Natural killer cell (primary cell): ENCODE measurements at regions of chr19 and their contacts with region 1.

Region 1: GRCh38 chr19:4400135-4400936 is at the start of gene SH3GL1:
- DNase-seq: peak; percentile 93 to 98
- ATAC-seq: peak; percentile 64 to 90 (median 68)
- H3K4me3 ChIP-seq: peak within 1 kb of the TSS; percentile 88
- H3K4me3 Mint-ChIP-seq: peak within 1 kb of the TSS; percentile 96
- H3K27ac ChIP-seq: peak within 1 kb of the TSS; percentile 97
- H3K27ac Mint-ChIP-seq: peak within 1 kb of the TSS; percentile 99 to 100
- H3K4me1 ChIP-seq: peaks cover 48% of the 10 kb centered on the region
- H3K4me1 Mint-ChIP-seq: peaks cover 38 to 51% of the 10 kb centered on the region in 2 donors
- H3K27me3 ChIP-seq: no peaks in the 10 kb centered on the region
- H3K27me3 Mint-ChIP-seq: no peaks in the 10 kb centered on the region
- CTCF ChIP-seq: peak; percentile 82
- total RNA-seq, gene SH3GL1: 43.9 to 55.7 (median 49.2) TPM

Region 2: GRCh38 chr19:4246767-4247593 is 153.4 kb before region 1 on chr19 and contains the start of gene YJU2:
- intact Hi-C with region 1: loop called (anchors 1 kb)
- DNase-seq: peak; percentile 96 to 100
- ATAC-seq: peak; percentile 93 to 98 (median 94)
- H3K4me3 ChIP-seq: peak within 1 kb of the TSS; percentile 87
- H3K4me3 Mint-ChIP-seq: peak within 1 kb of the TSS; percentile 88
- H3K27ac ChIP-seq: peak within 1 kb of the TSS; percentile 98
- H3K27ac Mint-ChIP-seq: peak within 1 kb of the TSS; percentile 96 to 100
- H3K4me1 ChIP-seq: peaks cover 16% of the 10 kb centered on the region
- H3K4me1 Mint-ChIP-seq: peaks cover 6 to 31% of the 10 kb centered on the region in 2 donors
- H3K27me3 ChIP-seq: no peaks in the 10 kb centered on the region
- H3K27me3 Mint-ChIP-seq: peaks cover 0 to 2% of the 10 kb centered on the region in 2 donors
- CTCF ChIP-seq: peak; percentile 43
- total RNA-seq, gene YJU2: 37.7 to 39.5 (median 38.5) TPM

Region 3: GRCh38 chr19:4267101-4267900 is 133.0 kb before region 1 on chr19:
- intact Hi-C with region 1: loop called (anchors 5 kb)
- DNase-seq: peak; percentile 46 to 72
- ATAC-seq: peak; percentile 22 to 58 (median 43)
- H3K4me3 ChIP-seq: no peak overlapping the region
- H3K4me3 Mint-ChIP-seq: peak overlapping the region; percentile 26
- H3K27ac ChIP-seq: no peak overlapping the region
- H3K27ac Mint-ChIP-seq: peak overlapping the region in 1 of 2 donors; percentile 88
- H3K4me1 ChIP-seq: peaks cover 49% of the 10 kb centered on the region
- H3K4me1 Mint-ChIP-seq: peaks cover 32 to 48% of the 10 kb centered on the region in 2 donors
- H3K27me3 ChIP-seq: no peaks in the 10 kb centered on the region
- H3K27me3 Mint-ChIP-seq: no peaks in the 10 kb centered on the region
- CTCF ChIP-seq: peak; percentile 79

Region 4: GRCh38 chr19:4342615-4343369 is 57.5 kb before region 1 on chr19:
- intact Hi-C with region 1: loop called (anchors 2 kb)
- DNase-seq: peak; percentile 87 to 98
- ATAC-seq: peak; percentile 79 to 92 (median 80)
- H3K4me3 ChIP-seq: peak overlapping the region; percentile 90
- H3K4me3 Mint-ChIP-seq: peak overlapping the region; percentile 93
- H3K27ac ChIP-seq: peak overlapping the region; percentile 89
- H3K27ac Mint-ChIP-seq: peak overlapping the region; percentile 79 to 92
- H3K4me1 ChIP-seq: peaks cover 51% of the 10 kb centered on the region
- H3K4me1 Mint-ChIP-seq: peaks cover 24 to 59% of the 10 kb centered on the region in 2 donors
- H3K27me3 ChIP-seq: no peaks in the 10 kb centered on the region
- H3K27me3 Mint-ChIP-seq: no peaks in the 10 kb centered on the region
- CTCF ChIP-seq: peak; percentile 27

Region 5: GRCh38 chr19:4369888-4370260 is 30.5 kb before region 1 on chr19:
- intact Hi-C with region 1: loop called (anchors 2 kb)
- DNase-seq: peak; percentile 69 to 82
- ATAC-seq: peak; percentile 77 to 87 (median 86)
- H3K4me3 ChIP-seq: peak overlapping the region; percentile 43
- H3K4me3 Mint-ChIP-seq: peak overlapping the region; percentile 92
- H3K27ac ChIP-seq: peak overlapping the region; percentile 85
- H3K27ac Mint-ChIP-seq: peak overlapping the region; percentile 93
- H3K4me1 ChIP-seq: peaks cover 74% of the 10 kb centered on the region
- H3K4me1 Mint-ChIP-seq: peaks cover 30 to 56% of the 10 kb centered on the region in 2 donors
- H3K27me3 ChIP-seq: no peaks in the 10 kb centered on the region
- H3K27me3 Mint-ChIP-seq: no peaks in the 10 kb centered on the region
- CTCF ChIP-seq: peak; percentile 29

Region 6: GRCh38 chr19:4457654-4458395 is 57.5 kb after region 1 on chr19 and contains the start of gene UBXN6:
- intact Hi-C with region 1: loop called (anchors 1 kb)
- DNase-seq: peak; percentile 95 to 99
- ATAC-seq: peak; percentile 96 to 99 (median 98)
- H3K4me3 ChIP-seq: peak within 1 kb of the TSS; percentile 45
- H3K4me3 Mint-ChIP-seq: peak within 1 kb of the TSS; percentile 94
- H3K27ac ChIP-seq: peak within 1 kb of the TSS; percentile 38
- H3K27ac Mint-ChIP-seq: peak within 1 kb of the TSS; percentile 89 to 97
- H3K4me1 ChIP-seq: peaks cover 24% of the 10 kb centered on the region
- H3K4me1 Mint-ChIP-seq: peaks cover 10 to 28% of the 10 kb centered on the region in 2 donors
- H3K27me3 ChIP-seq: no peaks in the 10 kb centered on the region
- H3K27me3 Mint-ChIP-seq: no peaks in the 10 kb centered on the region
- CTCF ChIP-seq: no peak
- total RNA-seq, gene UBXN6: 54.3 to 67.7 (median 63.3) TPM

Region 7: DNA sequence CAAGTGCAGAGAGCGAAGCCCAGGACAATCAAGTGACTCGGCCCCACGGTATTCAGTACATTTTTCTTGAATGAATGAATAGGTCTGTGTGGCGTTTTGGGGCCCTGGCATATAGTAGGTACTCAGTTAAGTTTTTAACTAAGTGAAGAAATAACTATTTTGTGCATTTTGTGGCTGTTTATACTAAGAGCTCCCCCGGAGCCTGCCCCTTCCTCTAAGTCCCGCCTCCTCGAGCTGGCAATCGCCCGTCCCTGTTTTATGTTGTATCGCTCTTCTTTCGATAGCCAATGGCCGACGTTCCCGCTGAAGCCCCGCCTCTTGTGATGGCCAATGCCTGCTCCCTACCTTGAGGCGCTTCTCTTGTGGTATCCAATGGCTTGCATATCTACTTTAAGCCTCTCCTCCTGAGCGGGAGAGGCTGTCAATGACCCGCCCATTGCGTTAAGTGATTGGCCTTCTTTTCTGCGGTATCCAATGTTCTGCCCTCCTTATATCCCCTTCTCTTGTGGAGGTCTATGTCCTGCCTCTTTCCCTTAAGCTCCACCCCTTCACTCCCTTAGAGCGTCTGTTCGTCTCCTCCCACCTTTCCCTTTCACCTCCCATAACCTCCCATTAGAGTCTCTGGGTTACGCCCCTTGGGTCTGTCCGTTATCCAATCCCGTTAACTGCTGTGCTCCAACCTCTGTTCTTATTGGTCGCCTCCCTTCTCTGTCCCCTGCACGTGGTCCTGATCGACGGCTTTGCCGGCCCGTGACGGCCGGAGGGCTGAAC is 71.3 kb after region 1 on chr19:
- intact Hi-C with region 1: loop called (anchors 1 kb)
- DNase-seq: peak; percentile 95 to 100
- ATAC-seq: peak; percentile 82 to 93 (median 82)
- H3K4me3 ChIP-seq: peak overlapping the region; percentile 77
- H3K4me3 Mint-ChIP-seq: no peak overlapping the region
- H3K27ac ChIP-seq: peak overlapping the region; percentile 82
- H3K27ac Mint-ChIP-seq: no peak overlapping the region
- H3K4me1 ChIP-seq: peaks cover 35% of the 10 kb centered on the region
- H3K4me1 Mint-ChIP-seq: peaks cover 20 to 25% of the 10 kb centered on the region in 2 donors
- H3K27me3 ChIP-seq: no peaks in the 10 kb centered on the region
- H3K27me3 Mint-ChIP-seq: no peaks in the 10 kb centered on the region
- CTCF ChIP-seq: no peak